HEK293T (cell line): ENCODE measurements at regions of chr7 and their contacts with region 1.

Region 1: GRCh38 chr7:70698219-70698832 is 433.6 kb upstream of the GALNT17 start:
- DNase-seq: peak; percentile 47

Region 2: DNA sequence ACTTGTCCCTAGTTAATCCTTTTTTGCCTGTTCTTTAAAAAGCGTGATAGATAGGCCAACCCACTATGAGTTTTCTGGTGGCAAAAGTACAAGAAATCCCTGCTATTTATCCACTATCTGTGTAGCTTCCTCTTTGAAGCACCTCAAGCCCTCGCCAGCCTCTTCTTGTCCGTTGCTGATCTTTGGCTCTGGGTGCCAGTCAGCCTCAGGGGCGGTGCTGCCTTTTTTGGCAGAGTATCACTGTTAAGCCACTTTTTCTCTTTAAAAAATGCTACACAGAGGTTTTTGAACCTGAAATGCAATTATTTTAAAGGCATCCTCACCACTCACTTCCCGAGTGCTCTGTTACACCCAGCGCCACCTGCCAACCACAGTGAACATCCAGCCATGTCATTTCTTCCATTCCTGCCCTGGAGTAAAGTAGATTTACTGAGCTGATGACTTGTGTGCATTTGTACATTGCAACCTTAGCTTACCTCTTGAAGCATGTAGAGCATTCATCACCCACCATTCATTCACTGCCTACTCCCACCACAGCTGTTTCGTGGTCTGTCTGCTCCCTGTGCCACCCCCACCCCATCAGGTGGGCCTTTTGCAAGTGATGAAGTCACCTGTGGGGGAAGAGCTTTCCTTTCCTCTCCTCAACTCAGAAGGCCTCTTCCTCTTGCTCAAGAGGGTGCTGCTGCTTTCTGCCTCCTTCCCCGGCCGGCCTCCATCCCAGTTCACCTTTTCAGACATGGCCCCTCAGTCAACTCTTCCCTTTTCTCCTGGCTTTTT is 19.4 kb after region 1 on chr7:
- CTCF ChIA-PET with region 1: interaction called, 13 read pairs
- POLR2A ChIA-PET with region 1: no interaction called
- DNase-seq: no peak